ENCODE measurements at regions of chr20 and their contacts with region 1.

Region 1: DNA sequence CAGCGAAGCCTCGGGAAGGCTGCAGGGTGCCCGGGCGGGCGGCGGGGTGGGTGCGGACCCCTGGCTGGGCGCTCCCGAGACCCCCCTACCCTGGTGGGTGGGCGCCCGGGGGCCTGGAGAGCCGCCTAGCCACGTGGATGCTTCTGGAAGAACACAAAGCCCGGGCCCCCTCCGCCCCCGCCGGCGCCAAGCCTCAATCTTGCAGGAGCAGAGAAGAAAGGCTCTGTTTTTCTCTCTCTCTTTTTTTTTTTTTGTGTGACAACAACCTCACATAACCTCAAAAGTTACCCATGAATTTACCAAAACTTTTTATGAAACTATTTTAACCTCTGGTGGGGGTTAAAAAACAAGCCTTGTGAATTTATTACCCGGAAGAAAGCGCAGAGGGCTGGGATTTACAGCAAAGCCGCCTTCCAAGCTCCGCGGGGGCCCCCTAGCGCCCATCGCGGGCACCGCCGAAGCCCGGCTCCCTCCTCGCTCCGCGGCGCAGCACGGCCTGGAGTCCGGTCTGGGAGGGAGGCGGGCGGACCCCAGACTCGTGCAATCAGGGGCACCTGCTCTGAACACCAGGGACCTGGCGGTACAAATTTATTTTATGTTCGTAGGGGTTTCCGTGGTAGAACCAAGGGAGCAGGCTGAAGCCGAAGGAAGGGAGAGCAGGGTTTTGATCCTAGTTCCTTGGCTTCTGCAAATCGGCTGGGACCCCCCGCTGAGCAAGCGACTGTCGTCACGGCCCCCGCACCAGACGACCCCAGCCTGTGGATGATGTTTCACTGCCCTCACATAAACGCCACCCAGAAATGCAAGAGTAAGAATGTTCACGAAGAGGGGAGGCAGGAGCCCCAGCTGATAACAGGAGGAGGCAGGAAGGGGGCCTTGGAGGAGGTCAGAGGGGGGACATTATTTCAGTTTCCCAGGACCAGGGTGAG is 58.9 kb downstream of the ZNF831 start:
- DNase-seq: peak; percentile 78 to 93 (median 93)
- ATAC-seq: peak; percentile 92 to 94
- H3K4me3 ChIP-seq: peak overlapping the region; percentile 67
- H3K27ac ChIP-seq: no peak overlapping the region
- H3K4me1 ChIP-seq: peaks cover 3% of the 10 kb centered on the region
- H3K27me3 ChIP-seq: no peaks in the 10 kb centered on the region

Region 2: GRCh38 chr20:58870239-58871014 is 352.1 kb before region 1 on chr20:
- intact Hi-C with region 1: loop called in 3 of 4 experiments (anchors 2 to 5 kb)
- DNase-seq: peak; percentile 57 to 78 (median 78)
- ATAC-seq: peak; percentile 82 to 87
- H3K4me3 ChIP-seq: no peak overlapping the region
- H3K27ac ChIP-seq: no peak overlapping the region
- H3K4me1 ChIP-seq: no peaks in the 10 kb centered on the region
- H3K27me3 ChIP-seq: no peaks in the 10 kb centered on the region

Region 3: GRCh38 chr20:59087829-59088433 is 134.6 kb before region 1 on chr20:
- intact Hi-C with region 1: loop called (anchors 2 to 10 kb)
- DNase-seq: peak; percentile 82 to 94 (median 87)
- ATAC-seq: peak; percentile 63 to 75
- H3K4me3 ChIP-seq: no peak overlapping the region
- H3K27ac ChIP-seq: no peak overlapping the region
- H3K4me1 ChIP-seq: no peaks in the 10 kb centered on the region
- H3K27me3 ChIP-seq: no peaks in the 10 kb centered on the region

Region 4: DNA sequence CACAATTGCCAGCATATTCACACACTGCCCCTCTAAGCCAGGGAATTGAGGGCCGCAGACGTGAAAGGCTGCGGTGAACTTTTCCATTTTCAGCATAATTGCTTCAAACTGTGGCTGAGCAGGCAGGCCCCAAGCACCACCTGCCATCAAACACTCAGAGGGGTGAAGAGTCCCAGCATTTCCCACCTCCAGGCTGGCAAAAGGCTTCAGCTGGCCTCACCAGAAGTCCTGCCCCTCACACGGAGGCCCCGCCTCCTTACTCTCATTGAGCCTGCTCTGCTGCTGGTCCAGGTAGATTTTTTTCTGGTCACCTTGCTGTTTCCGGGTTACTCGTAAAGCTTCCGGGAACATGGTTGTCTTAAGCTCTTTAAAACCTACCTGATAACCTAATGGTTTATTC is 127.9 kb before region 1 on chr20:
- intact Hi-C with region 1: loop called (anchors 2 to 10 kb)
- DNase-seq: no peak
- ATAC-seq: no peak
- H3K4me3 ChIP-seq: no peak overlapping the region
- H3K27ac ChIP-seq: no peak overlapping the region
- H3K4me1 ChIP-seq: no peaks in the 10 kb centered on the region
- H3K27me3 ChIP-seq: no peaks in the 10 kb centered on the region

Region 5: DNA sequence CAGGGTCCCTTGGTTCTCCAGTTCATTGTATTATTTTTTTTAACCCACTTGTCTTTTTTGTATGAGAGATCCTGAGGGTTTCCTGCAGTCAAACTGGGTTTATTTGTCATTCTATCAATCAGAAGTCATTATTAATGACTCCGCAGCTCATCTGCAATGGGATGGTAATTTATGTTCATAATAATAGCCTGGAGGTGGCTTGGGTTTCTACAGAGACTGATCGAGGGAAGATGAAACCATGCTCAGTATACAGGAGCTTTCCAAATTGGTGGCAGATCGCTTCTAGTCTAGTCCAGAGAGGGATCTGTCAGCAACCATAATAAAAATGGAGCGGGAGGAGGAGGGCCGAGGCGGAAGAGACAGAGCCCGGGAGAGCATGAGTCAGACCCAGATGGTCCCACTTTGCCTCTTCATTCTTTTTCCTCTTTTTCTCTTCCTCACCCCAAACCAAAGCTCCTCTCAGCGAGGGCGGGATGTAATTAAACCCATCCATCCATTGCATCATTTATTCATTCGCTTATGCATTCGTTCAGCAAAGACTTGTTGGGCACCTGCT is 100.5 kb after region 1 on chr20:
- intact Hi-C with region 1: no loop called
- DNase-seq: no peak
- ATAC-seq: no peak
- H3K4me3 ChIP-seq: no peak overlapping the region
- H3K27ac ChIP-seq: no peak overlapping the region
- H3K4me1 ChIP-seq: no peaks in the 10 kb centered on the region
- H3K27me3 ChIP-seq: no peaks in the 10 kb centered on the region

Region 6: DNA sequence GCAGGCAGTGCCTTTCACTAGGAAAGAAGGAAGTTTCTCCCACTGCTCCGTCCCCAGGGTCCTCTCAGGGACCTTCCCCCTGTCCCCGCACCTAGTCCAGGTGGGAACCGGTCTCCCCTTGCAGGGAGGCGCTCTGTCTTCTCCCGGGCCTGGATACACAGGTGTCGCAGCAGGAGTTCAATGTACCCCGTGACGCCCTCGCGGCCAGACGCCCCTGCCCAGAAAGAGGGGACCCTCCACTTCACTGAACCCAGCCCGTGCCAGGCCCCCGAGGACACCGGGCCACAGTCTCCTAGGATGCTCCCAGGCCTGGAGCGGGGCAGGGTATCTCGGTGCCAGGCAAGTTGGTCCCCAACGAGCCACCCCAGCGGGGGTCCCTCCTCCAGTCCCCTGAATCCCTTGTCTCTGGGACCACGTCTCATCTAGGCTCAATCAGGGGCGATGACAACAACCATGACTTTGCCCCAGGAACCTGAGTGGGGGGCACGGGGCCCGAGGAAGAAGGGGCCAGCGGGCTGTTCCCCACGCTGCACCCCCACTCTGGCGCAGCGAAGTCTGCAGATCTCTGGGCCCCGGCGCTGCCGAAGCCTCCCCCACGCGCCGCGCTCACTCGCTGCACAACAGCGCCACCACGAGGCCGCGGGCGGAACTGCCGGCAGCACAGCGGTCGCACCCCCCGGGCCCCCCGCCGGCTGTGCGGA is 180.9 kb after region 1 on chr20:
- intact Hi-C with region 1: loop called in 1 of 4 experiments (anchors 10 kb)
- DNase-seq: peak; percentile 38 to 74 (median 73)
- ATAC-seq: peak; percentile 65 to 83
- H3K4me3 ChIP-seq: no peak overlapping the region
- H3K27ac ChIP-seq: no peak overlapping the region
- H3K4me1 ChIP-seq: no peaks in the 10 kb centered on the region
- H3K27me3 ChIP-seq: no peaks in the 10 kb centered on the region

Region 7: DNA sequence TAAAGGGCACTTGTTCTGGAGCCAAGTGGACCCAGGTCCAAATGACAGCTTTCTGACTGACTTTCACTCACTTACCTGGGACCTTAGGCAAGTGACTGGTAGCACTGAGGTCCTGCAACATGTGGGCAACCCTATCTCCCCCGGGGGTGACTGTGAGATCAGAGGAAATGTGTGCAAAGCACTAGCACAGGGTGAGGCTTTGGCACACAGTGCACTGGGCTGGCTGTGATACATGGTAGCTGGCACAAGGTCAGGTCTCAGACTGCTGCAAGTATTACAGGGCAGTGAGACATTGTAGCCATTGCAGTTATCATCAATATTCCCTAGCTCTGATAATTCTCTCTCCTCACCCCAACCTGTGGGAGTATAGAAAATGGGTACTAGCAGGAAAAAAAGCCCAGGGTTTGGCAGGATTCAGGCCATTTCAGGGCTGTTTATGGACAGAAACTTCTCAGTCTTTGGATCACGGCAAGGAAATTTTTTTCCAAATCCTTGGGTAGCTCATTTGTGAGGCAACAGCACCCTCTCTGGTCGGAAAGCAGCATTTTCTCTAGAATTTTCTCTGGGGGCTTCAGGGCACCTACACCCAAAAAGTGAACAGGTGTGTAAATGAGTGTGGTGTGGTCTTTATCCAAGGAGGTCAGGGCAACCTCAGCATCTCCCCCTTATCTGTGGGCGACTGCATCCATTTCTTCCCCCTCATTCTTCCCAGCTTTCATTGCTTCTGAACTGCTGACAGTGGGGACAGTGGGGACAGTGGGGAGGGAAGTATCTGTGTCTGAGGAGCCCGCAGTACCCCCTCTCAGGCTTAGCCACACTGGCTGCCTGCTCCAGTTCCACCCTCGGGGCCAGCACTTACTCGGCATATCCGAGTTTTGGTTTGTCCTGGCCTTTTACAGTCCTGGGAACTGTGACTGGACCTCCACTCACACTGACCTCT is 233.2 kb after region 1 on chr20:
- intact Hi-C with region 1: loop called in 1 of 4 experiments (anchors 10 kb)
- DNase-seq: peak in 2 of 3 donors; percentile 54 to 82
- ATAC-seq: peak; percentile 75 to 77
- H3K4me3 ChIP-seq: no peak overlapping the region
- H3K27ac ChIP-seq: no peak overlapping the region
- H3K4me1 ChIP-seq: no peaks in the 10 kb centered on the region
- H3K27me3 ChIP-seq: no peaks in the 10 kb centered on the region

Measured in right cardiac atrium (tissue), 5 donors.